ENCODE measurements at regions of chr6 and their contacts with region 1.

Region 1: GRCh38 chr6:110179401-110180227 is at the start of gene WASF1:
- DNase-seq: peak; percentile 93
- H3K4me3 Mint-ChIP-seq: no peak within 1 kb of the TSS
- H3K27ac Mint-ChIP-seq: peak within 1 kb of the TSS; percentile 33
- H3K4me1 Mint-ChIP-seq: peaks cover 5% of the 10 kb centered on the region
- H3K27me3 Mint-ChIP-seq: peaks cover 7% of the 10 kb centered on the region
- total RNA-seq, gene WASF1: 1.3 to 1.5 TPM

Region 2: GRCh38 chr6:109482905-109483735 is 696.5 kb before region 1 on chr6 and contains the start of gene ZBTB24:
- CTCF ChIA-PET with region 1: no interaction called
- intact Hi-C with region 1: loop called (anchors 2 kb)
- DNase-seq: peak; percentile 88
- H3K4me3 Mint-ChIP-seq: peak within 1 kb of the TSS; percentile 85
- H3K27ac Mint-ChIP-seq: peak within 1 kb of the TSS; percentile 80
- H3K4me1 Mint-ChIP-seq: peaks cover 37% of the 10 kb centered on the region
- H3K27me3 Mint-ChIP-seq: no peaks in the 10 kb centered on the region
- total RNA-seq, gene ZBTB24: 6.9 to 7.4 TPM

Region 3: GRCh38 chr6:109705258-109705657 is 474.4 kb before region 1 on chr6:
- CTCF ChIA-PET with region 1: interaction called, 3 read pairs
- intact Hi-C with region 1: loop called (anchors 1 kb)
- DNase-seq: peak; percentile 91
- H3K4me3 Mint-ChIP-seq: no peak overlapping the region
- H3K27ac Mint-ChIP-seq: no peak overlapping the region
- H3K4me1 Mint-ChIP-seq: peaks cover 9% of the 10 kb centered on the region
- H3K27me3 Mint-ChIP-seq: no peaks in the 10 kb centered on the region

Region 4: DNA sequence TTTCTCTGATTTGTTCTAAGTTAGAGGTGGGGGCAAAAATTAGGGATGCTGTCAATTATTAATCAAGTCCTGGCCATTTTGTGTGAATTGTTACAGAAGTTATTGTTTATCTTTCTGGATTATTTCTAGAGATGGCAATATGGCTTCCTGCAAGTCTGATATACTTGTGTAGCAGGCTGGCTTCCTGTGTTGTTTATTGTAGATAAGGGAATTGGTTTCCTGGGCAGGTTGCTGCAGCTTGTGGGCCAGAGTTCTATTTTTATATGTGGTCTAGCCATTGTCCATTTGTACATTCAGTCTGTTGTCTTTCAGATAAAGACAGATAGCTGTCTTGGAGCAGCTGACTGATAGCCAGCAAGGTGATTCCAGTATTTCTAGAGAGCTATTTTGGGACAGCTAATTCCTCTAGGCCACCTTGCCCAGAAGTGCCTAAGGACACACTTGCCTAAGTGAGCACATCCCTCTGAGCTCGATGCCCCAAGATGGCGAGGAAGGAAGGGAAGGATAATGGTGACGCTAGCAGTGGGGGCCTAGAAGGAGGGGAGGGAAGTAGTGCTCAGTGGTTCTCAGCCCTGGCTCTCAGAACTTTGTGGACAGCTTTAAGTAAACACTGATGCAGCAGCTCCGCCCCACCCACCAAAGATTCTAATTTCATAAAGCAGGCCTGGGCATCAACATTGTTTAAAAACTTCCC is 210.2 kb after region 1 on chr6:
- CTCF ChIA-PET with region 1: interaction called, 13 read pairs
- intact Hi-C with region 1: loop called (anchors 1 kb)
- DNase-seq: no peak
- H3K4me3 Mint-ChIP-seq: no peak overlapping the region
- H3K27ac Mint-ChIP-seq: no peak overlapping the region
- H3K4me1 Mint-ChIP-seq: peaks cover 6% of the 10 kb centered on the region
- H3K27me3 Mint-ChIP-seq: no peaks in the 10 kb centered on the region

Region 5: DNA sequence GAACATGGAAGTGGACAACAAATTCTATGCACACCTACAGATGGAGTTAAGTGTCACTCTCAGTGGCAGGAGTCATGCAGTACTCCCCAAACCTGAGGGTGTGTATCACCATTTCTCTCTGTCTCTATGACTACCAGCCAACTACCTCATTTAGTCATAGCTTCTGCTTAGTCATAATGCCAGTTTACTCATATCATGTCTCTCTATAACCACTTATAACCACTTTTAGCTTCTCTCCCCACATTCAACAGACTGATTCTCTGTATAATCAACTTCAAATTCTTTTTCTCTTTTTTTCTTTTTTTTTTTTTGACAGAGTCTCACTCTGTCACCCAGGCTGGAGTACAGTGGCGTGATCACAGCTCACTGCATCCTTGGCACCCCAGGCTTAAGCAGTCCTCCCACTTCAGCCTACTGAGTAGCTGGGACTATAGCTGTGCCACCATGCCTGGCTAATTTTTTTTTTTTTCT is 765.1 kb after region 1 on chr6:
- CTCF ChIA-PET with region 1: no interaction called
- intact Hi-C with region 1: loop called (anchors 1 kb)
- DNase-seq: peak; percentile 67
- H3K4me3 Mint-ChIP-seq: no peak overlapping the region
- H3K27ac Mint-ChIP-seq: peak overlapping the region; percentile 51
- H3K4me1 Mint-ChIP-seq: peaks cover 8% of the 10 kb centered on the region
- H3K27me3 Mint-ChIP-seq: no peaks in the 10 kb centered on the region

Measured in activated naive CD4-positive, alpha-beta T cell treated with anti-CD3 and anti-CD28 coated beads for 36 hours (primary cell).